Heart right ventricle (tissue), 16 donors: ENCODE measurements at regions of chr12 and their contacts with region 1.

Region 1: DNA sequence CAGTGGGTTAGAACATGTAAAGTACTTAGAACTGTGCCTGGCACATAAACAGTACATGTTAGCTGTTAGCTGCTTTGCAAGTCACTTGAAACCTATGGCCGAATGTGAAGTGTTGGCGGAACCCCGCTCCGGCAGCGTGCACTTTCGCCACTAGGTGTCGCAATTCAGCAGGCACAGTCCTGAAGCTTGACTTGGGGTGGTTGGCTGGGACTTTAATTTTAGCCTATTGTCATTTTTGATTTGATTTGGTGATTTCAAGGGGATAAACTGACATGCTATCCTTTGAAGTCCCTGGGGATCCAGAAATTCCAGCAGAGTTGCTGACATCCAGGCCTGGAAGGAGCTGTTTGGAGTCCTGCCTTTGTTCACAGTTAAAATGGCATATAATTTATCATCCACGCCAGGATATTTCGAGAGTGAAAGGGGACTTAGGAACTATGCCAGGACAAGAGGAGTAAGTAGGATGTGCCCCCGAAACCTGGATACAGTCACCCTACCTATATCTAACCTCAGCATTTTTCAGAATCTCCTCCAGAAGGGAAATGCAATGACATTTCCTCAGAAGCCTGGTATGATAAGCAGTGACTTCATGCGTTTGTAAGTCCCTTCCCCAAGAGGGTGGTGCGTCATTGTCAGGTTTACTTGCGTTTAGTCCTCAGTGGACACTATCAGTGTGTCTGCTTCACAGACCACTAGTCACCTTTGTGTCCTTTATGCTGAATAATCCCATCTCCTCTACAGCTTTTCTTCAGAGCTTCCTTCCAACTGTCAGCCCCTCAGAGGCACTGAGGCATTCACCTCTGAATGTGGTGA is 3.5 kb upstream of the TSPAN9 start:
- DNase-seq: peak; percentile 87 to 88
- ATAC-seq: peak; percentile 10 to 70 (median 47)
- H3K4me3 ChIP-seq: no peak overlapping the region
- H3K27ac ChIP-seq: peak overlapping the region in 6 of 10 donors; percentile 5 to 50 (median 36)
- H3K4me1 ChIP-seq: peaks cover 3 to 53% (median 29%) of the 10 kb centered on the region in 9 donors
- H3K27me3 ChIP-seq: peaks cover 0 to 38% (median 0%) of the 10 kb centered on the region in 7 donors
- CTCF ChIP-seq: peak; percentile 96 to 100 (median 99)

Region 2: DNA sequence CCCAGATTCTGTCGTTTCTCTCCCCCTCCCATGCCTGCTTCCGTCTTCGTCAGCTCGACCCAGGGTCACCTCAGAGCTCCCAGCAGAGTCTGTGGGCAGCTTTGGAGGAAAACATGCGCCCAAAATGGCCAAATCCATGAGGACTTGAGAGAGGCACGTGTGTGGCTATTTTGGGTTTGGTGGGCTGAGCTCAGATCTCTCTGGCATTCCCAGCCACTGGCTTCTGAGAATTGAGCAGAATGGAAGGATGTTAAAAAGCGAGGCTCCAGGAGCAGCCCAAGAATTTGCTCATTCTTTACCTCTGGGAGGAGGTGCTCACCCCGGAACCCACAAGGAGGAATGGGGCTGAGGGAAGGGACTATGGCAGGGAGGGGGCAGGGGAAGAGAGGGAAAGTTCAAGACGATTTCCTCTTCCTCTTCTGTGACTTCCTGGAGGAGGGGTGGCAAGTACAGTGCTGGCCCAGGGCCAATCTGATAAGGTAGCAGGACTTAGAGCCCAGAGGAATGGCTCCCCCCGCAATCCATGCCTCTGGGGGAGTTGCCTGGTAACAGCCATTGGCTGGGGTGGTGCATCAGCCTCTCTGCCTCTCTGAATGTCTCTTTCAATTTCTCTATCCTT is 23.7 kb after region 1 on chr12:
- intact Hi-C with region 1: loop called in 1 of 10 experiments (anchors 2 kb)
- DNase-seq: peak; percentile 79 to 92
- ATAC-seq: peak; percentile 80 to 94 (median 92)
- H3K4me3 ChIP-seq: peak overlapping the region in 6 of 10 donors; percentile 9 to 33 (median 16)
- H3K27ac ChIP-seq: peak overlapping the region; percentile 41 to 90 (median 78)
- H3K4me1 ChIP-seq: peaks cover 14 to 73% (median 67%) of the 10 kb centered on the region in 9 donors
- H3K27me3 ChIP-seq: no peaks in the 10 kb centered on the region
- CTCF ChIP-seq: no peak

Region 3: GRCh38 chr12:3122835-3123678 is 49.4 kb after region 1 on chr12:
- intact Hi-C with region 1: loop called in 2 of 10 experiments (anchors 2 to 5 kb)
- DNase-seq: peak; percentile 67 to 86
- ATAC-seq: peak; percentile 62 to 88 (median 76)
- H3K4me3 ChIP-seq: no peak overlapping the region
- H3K27ac ChIP-seq: peak overlapping the region; percentile 34 to 88 (median 76)
- H3K4me1 ChIP-seq: peaks cover 24 to 66% (median 58%) of the 10 kb centered on the region in 9 donors
- H3K27me3 ChIP-seq: peaks cover 0 to 18% (median 0%) of the 10 kb centered on the region in 7 donors
- CTCF ChIP-seq: peak; percentile 9 to 45 (median 21)

Region 4: DNA sequence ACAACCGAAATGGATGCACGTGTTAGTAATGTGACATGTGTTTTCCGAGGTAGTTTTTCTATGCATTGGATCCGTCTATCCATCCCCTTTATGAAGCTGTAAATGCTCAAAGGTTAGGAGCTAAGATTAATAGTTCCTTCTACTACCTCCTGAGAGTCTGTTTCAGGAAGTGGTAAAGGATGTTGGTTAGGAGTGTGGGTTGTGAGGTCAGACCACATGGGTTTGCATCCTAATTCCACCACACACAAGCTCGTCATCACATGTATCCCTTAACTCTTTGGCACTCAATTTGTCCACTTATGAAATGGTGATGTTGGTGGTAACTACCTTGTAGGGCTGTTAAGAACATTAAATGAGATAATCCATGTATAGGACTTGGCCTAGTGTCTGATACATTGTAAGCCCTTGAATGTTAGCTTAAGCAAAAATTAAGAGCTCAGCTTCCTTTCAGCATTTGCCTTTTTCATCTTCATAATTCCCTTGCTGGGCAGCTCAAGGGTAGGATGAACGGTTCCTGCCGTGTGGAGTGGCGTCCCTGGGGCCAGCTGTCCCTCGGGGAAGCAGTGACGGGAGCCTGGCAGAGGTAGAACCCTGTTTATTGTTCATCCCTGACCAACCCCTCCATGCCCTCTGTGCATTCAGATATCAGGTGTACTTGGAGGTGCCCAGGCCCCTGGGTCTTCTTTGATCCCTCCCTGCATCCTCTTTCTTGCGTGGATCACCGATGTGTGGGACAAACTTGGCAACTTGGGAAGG is 55.8 kb after region 1 on chr12:
- intact Hi-C with region 1: loop called in 8 of 10 experiments (anchors 5 to 10 kb)
- DNase-seq: no peak
- ATAC-seq: peak in 1 of 8 donors; percentile 1
- H3K4me3 ChIP-seq: no peak overlapping the region
- H3K27ac ChIP-seq: peak overlapping the region in 9 of 10 donors; percentile 56 to 86 (median 78)
- H3K4me1 ChIP-seq: peaks cover 24 to 56% (median 53%) of the 10 kb centered on the region in 9 donors
- H3K27me3 ChIP-seq: peaks cover 0 to 21% (median 0%) of the 10 kb centered on the region in 7 donors
- CTCF ChIP-seq: no peak

Region 5: GRCh38 chr12:3135522-3136461 is 62.1 kb after region 1 on chr12:
- intact Hi-C with region 1: loop called in 9 of 10 experiments (anchors 2 to 10 kb)
- DNase-seq: no peak
- ATAC-seq: peak; percentile 11 to 52 (median 44)
- H3K4me3 ChIP-seq: no peak overlapping the region
- H3K27ac ChIP-seq: peak overlapping the region in 1 of 10 donors; percentile 3
- H3K4me1 ChIP-seq: peaks cover 37 to 100% (median 88%) of the 10 kb centered on the region in 9 donors
- H3K27me3 ChIP-seq: peaks cover 0 to 12% (median 0%) of the 10 kb centered on the region in 7 donors
- CTCF ChIP-seq: peak; percentile 75 to 86 (median 82)

Region 6: DNA sequence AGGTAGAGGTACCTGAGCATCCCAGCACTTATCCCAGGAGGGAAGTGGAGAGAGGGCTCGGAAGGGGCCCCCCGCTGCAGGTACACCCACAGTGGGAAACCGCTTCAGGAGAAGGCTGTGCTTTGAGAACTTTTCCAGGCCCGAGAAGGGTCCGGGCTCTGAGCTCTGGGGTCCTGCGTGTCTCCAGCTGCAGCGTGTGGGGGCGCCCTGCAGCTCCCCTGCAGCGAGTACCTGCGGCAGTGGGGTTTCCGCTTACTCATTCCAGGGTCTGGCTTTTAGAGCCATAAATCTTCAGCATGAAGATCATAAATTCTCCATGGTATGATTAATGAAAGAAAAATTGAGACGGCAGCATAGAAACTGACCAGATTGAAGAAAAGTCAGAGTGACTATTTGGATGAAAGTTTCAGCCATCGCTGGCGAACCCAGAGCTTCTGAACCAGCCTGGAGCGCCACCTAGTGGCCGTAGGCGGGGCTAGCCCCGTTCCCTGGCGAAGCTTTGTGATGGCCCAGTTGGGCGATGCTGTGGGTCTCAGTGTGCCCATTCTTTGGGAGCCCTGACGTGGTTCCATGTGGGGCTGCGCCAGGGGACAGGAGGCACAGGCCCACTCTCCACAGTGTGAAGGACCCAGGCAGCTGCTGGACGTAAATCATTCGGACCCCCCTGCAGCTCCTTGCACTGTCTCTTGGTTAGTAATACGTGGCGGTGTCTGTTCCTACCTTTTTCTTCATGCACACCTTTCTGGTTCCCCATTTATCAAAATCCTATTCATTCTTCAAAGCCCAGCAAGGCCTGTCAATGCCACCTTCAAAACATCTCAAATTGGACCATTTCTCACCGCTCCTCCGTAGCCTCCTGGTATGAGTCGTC is 201.8 kb after region 1 on chr12:
- intact Hi-C with region 1: loop called (anchors 1 to 5 kb)
- DNase-seq: peak; percentile 71 to 83
- ATAC-seq: peak; percentile 25 to 81 (median 57)
- H3K4me3 ChIP-seq: no peak overlapping the region
- H3K27ac ChIP-seq: peak overlapping the region in 6 of 10 donors; percentile 71 to 87 (median 82)
- H3K4me1 ChIP-seq: peaks cover 23 to 97% (median 76%) of the 10 kb centered on the region in 9 donors
- H3K27me3 ChIP-seq: no peaks in the 10 kb centered on the region
- CTCF ChIP-seq: peak; percentile 97 to 100 (median 98)

Region 7: DNA sequence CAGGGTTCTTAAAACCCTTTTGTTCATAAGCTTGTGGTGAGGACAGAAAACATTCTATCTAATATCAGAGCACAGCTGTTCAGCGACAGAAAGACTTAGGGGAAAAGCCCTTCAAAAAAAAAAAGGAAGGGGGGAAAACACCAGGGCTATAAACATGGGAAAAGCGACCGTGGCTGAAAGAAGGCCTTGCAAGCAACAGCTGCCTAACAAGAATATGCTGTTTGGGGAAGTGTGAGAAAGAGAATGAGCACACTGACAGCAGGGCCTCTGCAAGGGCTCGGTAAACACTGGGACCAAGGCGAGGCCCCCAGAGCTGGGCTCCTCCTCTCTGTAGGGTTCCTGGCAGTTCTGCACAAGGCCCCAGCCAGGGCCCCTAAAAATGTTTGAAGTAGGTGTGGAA is 1172.5 kb after region 1 on chr12:
- intact Hi-C with region 1: no loop called
- DNase-seq: no peak
- ATAC-seq: no peak
- H3K4me3 ChIP-seq: no peak overlapping the region
- H3K27ac ChIP-seq: no peak overlapping the region
- H3K4me1 ChIP-seq: peaks cover 0 to 4% (median 0%) of the 10 kb centered on the region in 9 donors
- H3K27me3 ChIP-seq: peaks cover 0 to 20% (median 11%) of the 10 kb centered on the region in 7 donors
- CTCF ChIP-seq: no peak